Naive thymus-derived CD8-positive, alpha-beta T cell (primary cell): ENCODE measurements at regions of chr16 and their contacts with region 1.

Region 1: GRCh38 chr16:252366-253337 is 18.0 kb downstream of the FAM234A start:
- DNase-seq: peak in 3 of 10 donors; percentile 22 to 46 (median 40)
- ATAC-seq: peak; percentile 78
- H3K4me3 Mint-ChIP-seq: peak overlapping the region; percentile 70 to 92 (median 88)
- H3K27ac Mint-ChIP-seq: peak overlapping the region; percentile 91 to 97 (median 96)
- H3K4me1 Mint-ChIP-seq: peaks cover 16 to 25% (median 22%) of the 10 kb centered on the region in 4 donors
- H3K27me3 Mint-ChIP-seq: no peaks in the 10 kb centered on the region

Region 2: GRCh38 chr16:65671-66137 is 186.9 kb before region 1 on chr16:
- POLR2A ChIA-PET with region 1: no interaction called
- DNase-seq: peak; percentile 64 to 88 (median 80)
- ATAC-seq: peak; percentile 97 to 98
- H3K4me3 Mint-ChIP-seq: no peak overlapping the region
- H3K27ac Mint-ChIP-seq: peak overlapping the region in 1 of 10 donors; percentile 11
- H3K4me1 Mint-ChIP-seq: peaks cover 0 to 5% (median 3%) of the 10 kb centered on the region in 4 donors
- H3K27me3 Mint-ChIP-seq: peaks cover 5 to 21% (median 9%) of the 10 kb centered on the region in 5 donors

Region 3: GRCh38 chr16:234468-235305 is 18.0 kb before region 1 on chr16 and contains the start of gene FAM234A:
- POLR2A ChIA-PET with region 1: interaction called, 25 read pairs
- DNase-seq: peak; percentile 90 to 99 (median 96)
- ATAC-seq: peak; percentile 86 to 90
- H3K4me3 Mint-ChIP-seq: peak within 1 kb of the TSS; percentile 90 to 99 (median 96)
- H3K27ac Mint-ChIP-seq: peak within 1 kb of the TSS; percentile 94 to 100 (median 100)
- H3K4me1 Mint-ChIP-seq: peaks cover 11 to 21% (median 17%) of the 10 kb centered on the region in 4 donors
- H3K27me3 Mint-ChIP-seq: no peaks in the 10 kb centered on the region
- polyA plus RNA-seq, gene FAM234A: 18.8 to 46.4 (median 34.4) TPM

Region 4: DNA sequence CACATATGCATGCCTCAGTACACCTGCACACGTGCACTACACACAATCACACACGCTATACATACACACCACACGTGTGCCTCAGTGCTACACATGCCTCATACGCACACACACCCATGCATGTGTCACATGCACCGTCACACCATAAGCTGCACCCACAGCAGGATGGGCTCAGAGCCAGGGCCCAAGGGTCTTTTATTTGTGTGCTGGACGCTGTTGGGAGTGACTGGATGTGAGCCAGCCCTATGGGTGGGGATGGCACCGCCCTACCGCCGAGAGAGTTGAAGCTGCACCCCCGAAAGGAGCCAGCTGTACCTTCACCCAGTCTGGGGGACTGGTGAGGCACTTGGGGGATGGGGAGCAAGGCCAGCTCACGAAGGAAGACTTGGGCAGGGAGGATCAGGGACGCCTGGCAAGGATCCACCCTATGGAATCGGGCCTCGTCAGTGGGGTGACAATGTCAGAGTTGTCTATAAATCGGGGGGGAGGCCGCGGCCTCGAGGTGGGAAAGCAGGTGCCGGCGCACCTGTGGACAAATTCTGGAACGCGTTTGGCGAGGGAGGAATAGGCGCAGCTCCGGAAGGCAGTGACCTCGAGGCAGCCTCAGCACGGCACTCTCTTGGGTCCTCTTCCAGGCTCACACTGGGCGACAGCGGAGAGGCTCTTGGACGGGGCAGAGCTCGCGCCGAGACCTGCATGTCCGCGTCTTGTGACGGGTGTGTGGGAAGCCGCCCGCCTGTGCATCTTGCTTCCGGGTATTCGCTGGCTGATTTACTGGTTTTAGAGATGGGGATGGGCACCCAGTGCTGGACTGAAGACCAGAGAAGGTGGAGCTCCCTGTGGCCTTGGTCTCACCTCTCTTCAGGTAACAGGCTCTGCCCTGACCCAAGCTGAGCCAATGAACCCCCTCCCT is 15.7 kb after region 1 on chr16:
- POLR2A ChIA-PET with region 1: no interaction called
- DNase-seq: no peak
- ATAC-seq: no peak
- H3K4me3 Mint-ChIP-seq: no peak overlapping the region
- H3K27ac Mint-ChIP-seq: peak overlapping the region in 1 of 10 donors; percentile 53
- H3K4me1 Mint-ChIP-seq: peaks cover 0 to 6% (median under 1%) of the 10 kb centered on the region in 4 donors
- H3K27me3 Mint-ChIP-seq: peaks cover 0 to 3% (median 0%) of the 10 kb centered on the region in 5 donors